Right cardiac atrium (tissue), 5 donors: ENCODE measurements at regions of chr16 and their contacts with region 1.

Region 1: GRCh38 chr16:70679666-70680494 is 6.0 kb downstream of the MTSS2 start:
- DNase-seq: peak; percentile 36 to 85 (median 76)
- ATAC-seq: peak in 1 of 2 donors; percentile 34
- H3K4me3 ChIP-seq: no peak overlapping the region
- H3K27ac ChIP-seq: no peak overlapping the region
- H3K4me1 ChIP-seq: peaks cover 9% of the 10 kb centered on the region
- H3K27me3 ChIP-seq: no peaks in the 10 kb centered on the region

Region 2: GRCh38 chr16:70750893-70751475 is 71.1 kb after region 1 on chr16:
- intact Hi-C with region 1: loop called in 2 of 4 experiments (anchors 5 kb)
- DNase-seq: peak; percentile 80 to 90 (median 89)
- ATAC-seq: peak; percentile 74 to 82
- H3K4me3 ChIP-seq: no peak overlapping the region
- H3K27ac ChIP-seq: peak overlapping the region; percentile 13
- H3K4me1 ChIP-seq: peaks cover 22% of the 10 kb centered on the region
- H3K27me3 ChIP-seq: no peaks in the 10 kb centered on the region